CD8-positive, alpha-beta T cell (primary cell): ENCODE measurements at regions of chr17 and their contacts with region 1.

Region 1: GRCh38 chr17:37691807-37692400 is 48.7 kb upstream of the DDX52 start:
- DNase-seq: no peak
- ATAC-seq: no peak
- H3K4me3 ChIP-seq: no peak overlapping the region
- H3K4me3 Mint-ChIP-seq: no peak overlapping the region
- H3K27ac ChIP-seq: no peak overlapping the region
- H3K27ac Mint-ChIP-seq: no peak overlapping the region
- H3K4me1 ChIP-seq: peaks cover 4% of the 10 kb centered on the region
- H3K4me1 Mint-ChIP-seq: peaks cover 10% of the 10 kb centered on the region
- H3K27me3 ChIP-seq: no peaks in the 10 kb centered on the region
- H3K27me3 Mint-ChIP-seq: no peaks in the 10 kb centered on the region
- CTCF ChIP-seq: no peak

Region 2: GRCh38 chr17:37609170-37610040 is 82.5 kb before region 1 on chr17 and contains the start of gene SYNRG:
- CTCF ChIA-PET with region 1: no interaction called
- POLR2A ChIA-PET with region 1: no interaction called
- intact Hi-C with region 1: no loop called
- DNase-seq: peak; percentile 92 to 99 (median 96)
- ATAC-seq: peak; percentile 81
- H3K4me3 ChIP-seq: peak within 1 kb of the TSS; percentile 38 to 91
- H3K4me3 Mint-ChIP-seq: peak within 1 kb of the TSS; percentile 93
- H3K27ac ChIP-seq: peak within 1 kb of the TSS; percentile 75 to 88
- H3K27ac Mint-ChIP-seq: peak within 1 kb of the TSS; percentile 95
- H3K4me1 ChIP-seq: peaks cover 39% of the 10 kb centered on the region
- H3K4me1 Mint-ChIP-seq: peaks cover 35% of the 10 kb centered on the region
- H3K27me3 ChIP-seq: no peaks in the 10 kb centered on the region
- H3K27me3 Mint-ChIP-seq: no peaks in the 10 kb centered on the region
- CTCF ChIP-seq: peak; percentile 76
- total RNA-seq, gene SYNRG: 46.4 to 47.0 TPM

Region 3: GRCh38 chr17:37676115-37676925 is 15.6 kb before region 1 on chr17:
- CTCF ChIA-PET with region 1: no interaction called
- POLR2A ChIA-PET with region 1: interaction called, 3 read pairs
- intact Hi-C with region 1: loop called in 1 of 2 experiments (anchors 1 kb)
- DNase-seq: no peak
- ATAC-seq: no peak
- H3K4me3 ChIP-seq: no peak overlapping the region
- H3K4me3 Mint-ChIP-seq: no peak overlapping the region
- H3K27ac ChIP-seq: no peak overlapping the region
- H3K27ac Mint-ChIP-seq: no peak overlapping the region
- H3K4me1 ChIP-seq: no peaks in the 10 kb centered on the region
- H3K4me1 Mint-ChIP-seq: no peaks in the 10 kb centered on the region
- H3K27me3 ChIP-seq: no peaks in the 10 kb centered on the region
- H3K27me3 Mint-ChIP-seq: peaks cover 11% of the 10 kb centered on the region
- CTCF ChIP-seq: no peak